ENCODE measurements at regions of chr16 and their contacts with region 1.

Region 1: DNA sequence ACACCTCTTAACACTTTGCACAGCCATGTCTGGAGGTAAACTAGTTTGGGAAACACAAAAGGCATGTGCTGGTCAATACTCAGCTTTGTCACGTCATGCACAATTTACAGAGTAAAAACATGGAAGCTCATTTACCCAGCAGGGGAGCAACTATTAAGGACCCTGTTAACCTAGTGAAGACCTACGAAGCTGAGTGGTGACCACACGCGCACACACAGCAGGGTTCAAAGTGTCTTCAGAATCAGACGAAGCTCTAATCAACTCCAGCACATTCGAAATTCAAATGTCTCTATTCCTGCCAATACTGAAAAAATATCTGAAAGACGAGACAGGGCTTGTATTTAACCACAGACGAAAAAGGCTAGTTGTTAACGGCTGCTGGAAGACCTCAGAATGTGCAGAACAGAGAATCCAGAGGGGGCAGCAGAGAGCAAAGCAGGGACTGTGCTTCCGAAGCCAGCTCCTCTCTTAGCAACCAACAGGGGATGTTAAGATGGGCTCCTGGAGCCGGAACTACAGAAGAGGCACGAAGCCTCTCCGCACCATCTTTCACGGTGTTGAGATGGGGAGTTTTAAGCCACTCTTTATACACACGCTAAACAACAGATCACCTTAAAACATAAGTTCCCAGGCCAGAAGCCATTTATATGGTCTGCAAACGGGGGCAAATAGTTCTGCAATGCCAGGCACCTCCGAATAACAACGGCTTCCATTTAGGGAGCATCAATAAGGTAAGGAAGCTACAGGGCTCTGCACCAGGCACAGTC is 45.7 kb downstream of the CMTM4 start:
- DNase-seq: peak; percentile 79 to 84
- ATAC-seq: peak; percentile 97 to 99
- H3K4me3 ChIP-seq: peak overlapping the region; percentile 43
- H3K27ac ChIP-seq: peak overlapping the region; percentile 56 to 61; a peak in 4 of 6 replicates
- H3K4me1 ChIP-seq: peaks cover 8% of the 10 kb centered on the region; the same call in 2 of the 3 replicates
- CTCF ChIP-seq: peak; percentile 86
- EP300 ChIP-seq: no peak
- POLR2A ChIP-seq: no peak
- RAD21 ChIP-seq: peak; percentile 44 to 61; a peak in 2 of 5 replicates

Region 2: GRCh38 chr16:66344533-66345145 is 306.3 kb before region 1 on chr16:
- CTCF ChIA-PET with region 1: no interaction called
- POLR2A ChIA-PET with region 1: no interaction called
- DNase-seq: peak in 1 of 2 experiments; percentile 31
- ATAC-seq: peak in 1 of 2 experiments; percentile 53; a peak in 3 of 6 replicates
- H3K4me3 ChIP-seq: no peak overlapping the region
- H3K27ac ChIP-seq: no peak overlapping the region
- H3K4me1 ChIP-seq: no peaks in the 10 kb centered on the region
- CTCF ChIP-seq: peak; percentile 82
- EP300 ChIP-seq: no peak
- POLR2A ChIP-seq: no peak
- RAD21 ChIP-seq: peak; percentile 16 to 40; a peak in 2 of 5 replicates

Region 3: GRCh38 chr16:66596986-66597848 is 53.7 kb before region 1 on chr16:
- CTCF ChIA-PET with region 1: no interaction called
- POLR2A ChIA-PET with region 1: no interaction called
- DNase-seq: no peak
- ATAC-seq: no peak
- H3K4me3 ChIP-seq: no peak overlapping the region
- H3K27ac ChIP-seq: no peak overlapping the region
- H3K4me1 ChIP-seq: no peaks in the 10 kb centered on the region
- CTCF ChIP-seq: no peak
- EP300 ChIP-seq: no peak
- POLR2A ChIP-seq: no peak
- RAD21 ChIP-seq: no peak

Region 4: GRCh38 chr16:66618588-66619375 is 32.1 kb before region 1 on chr16:
- CTCF ChIA-PET with region 1: interaction called, 16 read pairs
- POLR2A ChIA-PET with region 1: no interaction called
- DNase-seq: peak in 1 of 2 experiments; percentile 26
- ATAC-seq: peak; percentile 32 to 59; a peak in 4 of 6 replicates
- H3K4me3 ChIP-seq: no peak overlapping the region
- H3K27ac ChIP-seq: peak overlapping the region; percentile 37 to 69; a peak in 4 of 6 replicates
- H3K4me1 ChIP-seq: peaks cover 24% of the 10 kb centered on the region
- CTCF ChIP-seq: no peak
- EP300 ChIP-seq: no peak
- POLR2A ChIP-seq: no peak
- RAD21 ChIP-seq: no peak

Region 5: GRCh38 chr16:66639091-66639885 is 11.6 kb before region 1 on chr16:
- CTCF ChIA-PET with region 1: interaction called, 56 read pairs
- POLR2A ChIA-PET with region 1: interaction called, 4 read pairs
- DNase-seq: no peak
- ATAC-seq: no peak
- H3K4me3 ChIP-seq: no peak overlapping the region
- H3K27ac ChIP-seq: no peak overlapping the region
- H3K4me1 ChIP-seq: no peaks in the 10 kb centered on the region
- CTCF ChIP-seq: no peak
- EP300 ChIP-seq: no peak
- POLR2A ChIP-seq: no peak
- RAD21 ChIP-seq: no peak

Region 6: DNA sequence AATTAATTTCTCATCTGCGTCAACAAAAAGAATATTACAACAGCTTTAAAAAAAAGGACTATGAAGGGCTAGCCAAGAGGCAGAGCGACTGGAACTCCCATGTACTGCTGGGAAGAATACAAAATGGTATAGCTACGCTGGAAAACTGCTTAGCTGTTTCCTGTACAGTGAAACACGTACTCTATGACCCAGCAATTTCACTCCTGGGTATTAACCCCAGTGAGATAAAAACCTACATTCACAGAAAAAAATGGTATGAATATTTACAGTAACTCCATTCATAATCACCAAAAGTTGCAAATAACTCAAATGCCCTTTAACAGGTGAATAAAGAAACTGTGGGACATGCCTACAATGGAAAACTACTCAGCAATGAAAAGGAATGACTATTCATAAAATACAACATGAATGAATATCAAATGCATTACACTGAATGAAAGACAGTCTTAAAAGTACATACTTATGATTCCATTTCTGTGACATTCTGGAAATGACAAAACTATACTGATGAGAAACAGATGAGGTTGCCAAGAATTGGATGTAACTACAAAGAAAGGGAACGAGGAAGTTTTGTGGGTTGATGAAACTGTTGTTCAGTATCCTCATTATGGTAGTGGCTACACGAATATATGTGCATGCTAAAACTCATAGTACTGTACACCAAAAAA is 18.0 kb after region 1 on chr16:
- CTCF ChIA-PET with region 1: interaction called, 74 read pairs
- POLR2A ChIA-PET with region 1: no interaction called
- DNase-seq: no peak
- ATAC-seq: no peak
- H3K4me3 ChIP-seq: no peak overlapping the region
- H3K27ac ChIP-seq: no peak overlapping the region
- H3K4me1 ChIP-seq: no peaks in the 10 kb centered on the region
- CTCF ChIP-seq: no peak
- EP300 ChIP-seq: no peak
- POLR2A ChIP-seq: no peak
- RAD21 ChIP-seq: no peak

Region 7: DNA sequence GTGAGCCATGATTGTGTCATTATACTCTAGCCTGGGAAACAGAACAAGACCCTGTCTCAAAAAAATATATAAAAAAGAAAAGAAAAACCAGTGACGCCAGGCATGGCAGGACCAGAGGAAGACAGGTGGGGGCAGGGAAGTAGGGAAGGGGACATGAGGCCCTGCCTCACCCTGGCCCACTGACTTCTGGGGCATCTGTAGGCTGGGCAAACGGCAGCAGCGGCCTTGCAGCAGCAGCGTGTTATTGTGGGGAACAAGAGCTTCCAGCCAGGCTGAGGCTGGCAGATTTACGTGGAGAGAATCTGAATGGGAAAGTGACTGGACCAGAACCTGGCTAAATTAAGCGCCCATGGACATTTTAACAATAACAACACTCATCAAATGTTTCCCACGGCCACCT is 26.3 kb after region 1 on chr16:
- CTCF ChIA-PET with region 1: interaction called, 21 read pairs
- POLR2A ChIA-PET with region 1: no interaction called
- DNase-seq: no peak
- ATAC-seq: no peak
- H3K4me3 ChIP-seq: no peak overlapping the region
- H3K27ac ChIP-seq: no peak overlapping the region
- H3K4me1 ChIP-seq: no peaks in the 10 kb centered on the region
- CTCF ChIP-seq: no peak
- EP300 ChIP-seq: no peak
- POLR2A ChIP-seq: no peak
- RAD21 ChIP-seq: no peak

Region 8: GRCh38 chr16:66728117-66728787 is 77.4 kb after region 1 on chr16:
- CTCF ChIA-PET with region 1: interaction called, 20 read pairs
- POLR2A ChIA-PET with region 1: no interaction called
- DNase-seq: peak; percentile 61 to 66
- ATAC-seq: peak; percentile 90 to 94
- H3K4me3 ChIP-seq: no peak overlapping the region
- H3K27ac ChIP-seq: no peak overlapping the region
- H3K4me1 ChIP-seq: no peaks in the 10 kb centered on the region
- CTCF ChIP-seq: peak; percentile 80
- EP300 ChIP-seq: no peak
- POLR2A ChIP-seq: no peak
- RAD21 ChIP-seq: peak; percentile 37 to 52; a peak in 3 of 5 replicates

Region 9: GRCh38 chr16:66751303-66751991 is 100.6 kb after region 1 on chr16 and contains the start of gene DYNC1LI2:
- CTCF ChIA-PET with region 1: interaction called, 10 read pairs
- POLR2A ChIA-PET with region 1: no interaction called
- DNase-seq: peak; percentile 73 to 80
- ATAC-seq: peak; percentile 91 to 95
- H3K4me3 ChIP-seq: peak within 1 kb of the TSS; percentile 92
- H3K27ac ChIP-seq: peak within 1 kb of the TSS; percentile 92 to 96
- H3K4me1 ChIP-seq: peaks cover 16% of the 10 kb centered on the region
- CTCF ChIP-seq: peak; percentile 91
- EP300 ChIP-seq: no peak
- POLR2A ChIP-seq: peak; percentile 55
- RAD21 ChIP-seq: peak; percentile 9 to 59; a peak in 4 of 5 replicates
- polyA plus RNA-seq, gene DYNC1LI2: 112 and 128 TPM in 2 replicates

Region 10: GRCh38 chr16:66947302-66948065 is 296.6 kb after region 1 on chr16:
- CTCF ChIA-PET with region 1: no interaction called
- POLR2A ChIA-PET with region 1: no interaction called
- DNase-seq: peak; percentile 83 to 94
- ATAC-seq: peak; percentile 82 to 93
- H3K4me3 ChIP-seq: peak overlapping the region; percentile 22; the same call in 2 of the 3 replicates
- H3K27ac ChIP-seq: 0 out of 6 replicates have a peak overlapping the region, but pooled peaks of 1 of the 2 experiments have one; percentile 21
- H3K4me1 ChIP-seq: 0 out of 3 replicates have a peak, but pooled peaks cover 4% of the 10 kb centered on the region
- CTCF ChIP-seq: peak; percentile 81
- EP300 ChIP-seq: no peak
- POLR2A ChIP-seq: no peak
- RAD21 ChIP-seq: peak; percentile 68 to 79

Region 11: DNA sequence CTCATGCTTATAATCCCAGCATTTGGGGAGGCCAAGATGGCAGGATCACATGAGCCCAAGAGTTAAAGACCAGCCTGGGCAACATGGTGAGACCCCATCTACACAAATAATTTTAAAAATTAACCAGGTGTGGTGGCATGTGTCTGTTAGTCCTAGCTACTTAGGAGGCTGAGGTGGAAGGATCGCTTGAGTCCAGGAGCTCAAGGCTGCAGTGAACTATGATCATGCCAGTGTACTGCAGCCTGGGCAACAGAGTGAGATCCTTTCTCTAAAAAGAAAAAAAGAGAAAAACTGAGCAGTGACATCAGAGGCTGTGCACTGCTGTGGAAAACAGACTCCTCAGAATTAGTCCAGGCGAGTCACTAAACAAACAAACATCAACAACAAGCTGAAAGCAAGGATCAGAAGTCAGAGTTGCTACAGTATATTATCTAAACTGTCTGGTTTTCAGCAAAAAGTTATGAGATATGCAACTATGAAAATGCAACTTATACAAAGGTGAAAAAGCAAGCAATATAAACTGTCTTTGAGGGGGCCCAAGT is 417.4 kb after region 1 on chr16:
- CTCF ChIA-PET with region 1: no interaction called
- POLR2A ChIA-PET with region 1: no interaction called
- DNase-seq: peak in 1 of 2 experiments; percentile 10
- ATAC-seq: peak in 1 of 2 experiments; percentile 35; a peak in 1 of 6 replicates
- H3K4me3 ChIP-seq: no peak overlapping the region
- H3K27ac ChIP-seq: no peak overlapping the region
- H3K4me1 ChIP-seq: 0 out of 3 replicates have a peak, but pooled peaks cover 9% of the 10 kb centered on the region
- CTCF ChIP-seq: no peak
- EP300 ChIP-seq: no peak
- POLR2A ChIP-seq: no peak
- RAD21 ChIP-seq: no peak

Measured in A549 (cell line).